ENCODE measurements at regions of chr12 and their contacts with region 1.

Region 1: DNA sequence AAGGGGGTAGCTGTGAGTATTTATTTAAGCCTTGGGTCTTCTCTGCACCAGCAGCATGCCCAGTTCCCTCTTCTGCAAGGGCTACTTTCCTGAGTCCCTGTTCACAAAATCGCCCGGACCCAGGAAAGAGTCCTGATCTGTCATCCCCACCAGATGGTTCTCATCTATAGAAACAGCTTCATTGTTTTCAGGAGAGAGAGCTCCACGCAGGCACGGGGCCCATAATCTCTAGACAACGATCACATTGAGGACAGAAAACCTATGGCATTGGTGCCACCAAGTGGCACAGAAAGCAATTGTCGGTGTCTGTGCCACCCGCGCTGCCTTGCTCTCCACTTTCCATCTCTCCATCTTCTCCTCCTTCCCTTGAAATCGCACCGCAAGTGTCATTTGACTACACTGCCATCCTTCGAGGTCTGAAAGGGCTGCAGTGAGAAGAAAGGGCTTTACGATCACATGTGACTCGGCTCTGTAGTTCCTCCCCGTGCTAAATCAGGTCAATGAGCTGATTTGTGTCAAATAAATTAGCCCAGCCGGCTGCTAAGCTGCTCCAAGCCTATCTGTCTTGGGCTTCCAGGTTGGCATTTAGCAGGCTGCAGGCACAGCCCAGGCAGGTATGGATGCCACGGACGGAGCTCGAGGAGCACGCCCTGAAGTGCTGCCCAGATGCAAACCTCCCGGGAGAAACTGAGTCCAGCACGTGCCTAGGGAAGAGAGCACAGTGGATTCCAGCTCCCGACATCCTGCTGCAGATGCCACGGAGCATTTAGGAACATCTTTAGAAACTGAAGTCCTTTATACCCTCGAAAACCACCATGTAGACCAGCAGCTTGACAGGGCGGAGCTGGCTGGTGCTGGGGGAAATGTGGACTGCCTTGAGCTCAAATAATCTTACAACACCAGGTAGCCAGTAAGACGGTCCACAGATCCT is 28.8 kb downstream of the SPRING1 start:
- DNase-seq: peak; percentile 65 to 74
- ATAC-seq: peak; percentile 95 to 96
- H3K4me3 ChIP-seq: peak overlapping the region; percentile 17; the same call in 1 of the 3 replicates
- H3K27ac ChIP-seq: peak overlapping the region in 1 of 2 experiments; percentile 49; a peak in 3 of 6 replicates
- H3K4me1 ChIP-seq: peaks cover 10% of the 10 kb centered on the region; the same call in 1 of the 3 replicates
- CTCF ChIP-seq: peak; percentile 82
- EP300 ChIP-seq: no peak
- POLR2A ChIP-seq: no peak
- RAD21 ChIP-seq: peak; percentile 93 to 96

Region 2: DNA sequence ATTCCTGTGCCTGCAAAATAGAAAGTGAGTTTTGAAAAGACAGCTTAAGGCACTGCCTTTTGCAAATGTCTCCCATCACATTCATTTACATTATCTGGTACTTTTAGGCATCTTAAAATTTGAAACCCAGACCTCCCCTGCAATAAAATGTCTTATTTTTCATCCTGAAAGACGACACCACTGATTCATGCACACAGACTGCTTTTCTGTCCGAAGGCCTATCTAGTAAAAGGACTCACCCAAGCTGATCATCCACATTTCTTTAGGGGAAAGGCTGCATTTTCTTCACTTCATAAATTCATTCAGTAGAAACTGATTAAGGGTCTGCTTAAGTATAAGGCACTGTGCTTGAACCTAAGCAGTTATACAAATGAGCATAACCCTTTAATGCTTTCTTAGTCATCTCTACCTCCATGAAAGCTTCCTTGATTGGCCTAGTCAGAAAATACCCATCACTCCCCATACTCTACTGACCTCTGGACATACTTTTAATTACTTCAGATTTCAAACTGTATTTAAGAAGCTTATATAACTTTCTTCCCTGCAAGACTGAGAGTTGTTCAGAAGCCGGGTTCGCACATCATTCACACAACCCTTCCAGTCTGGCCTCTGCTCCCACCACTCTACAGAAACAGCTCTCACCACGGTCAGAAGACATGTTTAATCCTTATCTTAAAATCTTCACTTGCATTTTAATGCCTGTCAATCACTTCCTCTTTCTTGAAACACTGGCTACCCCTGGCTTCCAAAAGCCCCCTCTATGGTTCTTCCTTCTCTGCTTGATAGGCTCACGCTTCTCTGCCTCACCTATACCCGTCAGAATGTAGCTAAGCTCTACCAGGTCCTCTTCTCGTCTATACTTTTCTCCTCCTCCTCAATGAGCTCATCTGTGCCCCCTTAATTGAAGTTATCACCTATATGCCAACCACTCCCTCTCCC is 720.2 kb before region 1 on chr12:
- CTCF ChIA-PET with region 1: interaction called, 15 read pairs
- POLR2A ChIA-PET with region 1: no interaction called
- DNase-seq: no peak
- ATAC-seq: no peak; a peak in 2 of 6 replicates
- H3K4me3 ChIP-seq: no peak overlapping the region
- H3K27ac ChIP-seq: no peak overlapping the region
- H3K4me1 ChIP-seq: no peaks in the 10 kb centered on the region
- CTCF ChIP-seq: no peak
- EP300 ChIP-seq: no peak
- POLR2A ChIP-seq: no peak
- RAD21 ChIP-seq: no peak

Region 3: DNA sequence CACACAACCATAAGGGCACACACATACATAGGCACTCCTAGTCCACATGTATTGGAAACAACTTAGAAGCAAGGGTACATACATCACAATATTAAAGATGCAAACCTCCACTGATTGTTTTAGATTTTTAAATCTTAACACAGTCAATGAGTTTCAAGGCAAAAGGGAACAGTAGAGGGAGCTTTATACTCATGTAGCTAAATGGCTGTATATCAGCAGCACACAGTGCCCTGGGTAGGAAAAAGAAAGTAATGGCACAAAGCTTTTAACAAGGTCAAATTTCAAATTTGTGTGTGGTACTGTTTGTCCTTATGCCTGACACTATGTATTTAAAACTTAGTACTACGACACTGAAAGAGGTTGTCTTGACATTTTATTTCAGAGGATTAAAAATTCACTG is 693.6 kb before region 1 on chr12:
- CTCF ChIA-PET with region 1: interaction called, 10 read pairs
- POLR2A ChIA-PET with region 1: no interaction called
- DNase-seq: peak; percentile 23 to 52
- ATAC-seq: peak; percentile 84 to 90
- H3K4me3 ChIP-seq: no peak overlapping the region
- H3K27ac ChIP-seq: no peak overlapping the region
- H3K4me1 ChIP-seq: peaks cover 11% of the 10 kb centered on the region; the same call in 1 of the 3 replicates
- CTCF ChIP-seq: peak; percentile 79
- EP300 ChIP-seq: no peak
- POLR2A ChIP-seq: no peak
- RAD21 ChIP-seq: peak; percentile 82 to 84

Region 4: DNA sequence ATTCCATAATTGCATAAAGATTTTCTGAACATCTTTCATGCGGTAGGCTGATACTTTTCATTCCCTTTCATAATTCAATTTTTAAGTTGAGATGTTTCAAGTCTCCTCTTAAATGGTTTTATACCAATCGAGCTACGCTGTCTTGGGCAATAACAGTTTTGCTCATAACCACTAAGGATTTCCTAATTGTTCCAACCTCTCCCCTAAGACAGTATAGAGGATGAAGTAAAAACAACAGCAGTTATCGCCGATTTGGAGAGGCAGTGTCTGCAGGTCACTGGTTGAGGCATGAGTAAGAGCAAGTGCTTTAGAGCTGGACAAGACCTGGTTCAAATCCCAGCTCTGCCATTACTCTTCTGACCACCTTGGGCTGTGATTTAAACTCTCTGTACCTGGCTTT is 424.7 kb before region 1 on chr12:
- CTCF ChIA-PET with region 1: no interaction called
- POLR2A ChIA-PET with region 1: no interaction called
- DNase-seq: no peak
- ATAC-seq: no peak
- H3K4me3 ChIP-seq: no peak overlapping the region
- H3K27ac ChIP-seq: no peak overlapping the region
- H3K4me1 ChIP-seq: peaks cover 25% of the 10 kb centered on the region
- CTCF ChIP-seq: no peak
- EP300 ChIP-seq: no peak
- POLR2A ChIP-seq: no peak
- RAD21 ChIP-seq: no peak

Region 5: DNA sequence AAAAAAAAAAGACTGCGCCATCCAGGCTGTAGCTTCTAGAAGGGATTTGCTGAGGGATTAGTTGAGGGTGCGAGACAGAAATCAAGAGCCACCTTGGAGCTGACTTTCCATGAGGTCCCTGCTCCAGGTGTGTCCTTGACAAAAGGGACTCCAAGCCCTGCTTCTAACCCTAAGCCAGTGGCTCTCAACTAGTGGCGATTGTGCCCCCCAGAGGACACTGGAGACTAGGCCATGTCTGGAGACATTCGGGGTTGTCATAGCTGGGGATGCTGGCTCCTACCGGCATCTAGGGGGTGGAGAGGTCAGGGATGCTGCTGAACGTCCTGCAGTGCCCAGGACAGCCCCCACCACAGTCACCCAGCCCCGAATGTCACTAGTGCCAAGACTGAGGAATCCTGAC is 11.8 kb before region 1 on chr12:
- CTCF ChIA-PET with region 1: interaction called, 39 read pairs
- POLR2A ChIA-PET with region 1: no interaction called
- DNase-seq: peak; percentile 71 to 81
- ATAC-seq: peak; percentile 89 to 92
- H3K4me3 ChIP-seq: no peak overlapping the region
- H3K27ac ChIP-seq: 0 out of 6 replicates have a peak overlapping the region, but pooled peaks of 1 of the 2 experiments have one; percentile 27
- H3K4me1 ChIP-seq: no peaks in the 10 kb centered on the region
- CTCF ChIP-seq: peak; percentile 50
- EP300 ChIP-seq: no peak
- POLR2A ChIP-seq: no peak
- RAD21 ChIP-seq: peak; percentile 62 to 84

Region 6: DNA sequence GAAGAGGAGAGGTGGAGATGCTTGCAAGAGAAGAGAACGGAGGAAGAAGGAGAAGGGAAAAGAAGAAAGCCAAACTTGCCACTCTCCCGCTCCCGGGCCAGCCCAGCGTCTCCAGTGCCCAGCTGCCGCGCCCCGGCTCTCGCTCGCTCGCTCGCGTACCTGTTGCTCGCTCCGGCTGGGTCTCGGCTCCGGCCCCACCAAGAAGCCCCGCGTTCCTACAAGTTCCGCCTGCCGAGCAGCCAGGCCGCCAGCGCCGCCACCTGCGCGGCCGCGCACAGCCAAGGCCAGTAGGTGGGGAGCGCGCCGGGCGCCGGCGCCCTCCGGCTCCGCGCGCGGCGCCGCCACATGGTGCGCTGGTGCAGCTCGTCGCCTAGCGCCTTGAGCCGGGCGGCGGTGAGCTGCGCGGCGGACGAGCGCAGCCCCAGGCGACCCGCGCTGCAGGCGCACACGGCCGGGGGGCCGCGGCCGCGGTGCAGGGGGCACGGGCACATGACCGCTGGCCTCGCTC is 171.8 kb after region 1 on chr12:
- CTCF ChIA-PET with region 1: interaction called, 16 read pairs
- POLR2A ChIA-PET with region 1: no interaction called
- DNase-seq: peak; percentile 63 to 76
- ATAC-seq: peak; percentile 80
- H3K4me3 ChIP-seq: peak overlapping the region; percentile 47
- H3K27ac ChIP-seq: peak overlapping the region; percentile 68 to 87; a peak in 5 of 6 replicates
- H3K4me1 ChIP-seq: peaks cover 24% of the 10 kb centered on the region
- CTCF ChIP-seq: peak; percentile 35; the same call in 2 of the 3 replicates
- EP300 ChIP-seq: no peak
- POLR2A ChIP-seq: no peak
- RAD21 ChIP-seq: peak; percentile 14 to 27; a peak in 2 of 5 replicates

Measured in A549 (cell line).